AG04449 (cell line): ENCODE measurements at regions of chr11 and their contacts with region 1.

Region 1: DNA sequence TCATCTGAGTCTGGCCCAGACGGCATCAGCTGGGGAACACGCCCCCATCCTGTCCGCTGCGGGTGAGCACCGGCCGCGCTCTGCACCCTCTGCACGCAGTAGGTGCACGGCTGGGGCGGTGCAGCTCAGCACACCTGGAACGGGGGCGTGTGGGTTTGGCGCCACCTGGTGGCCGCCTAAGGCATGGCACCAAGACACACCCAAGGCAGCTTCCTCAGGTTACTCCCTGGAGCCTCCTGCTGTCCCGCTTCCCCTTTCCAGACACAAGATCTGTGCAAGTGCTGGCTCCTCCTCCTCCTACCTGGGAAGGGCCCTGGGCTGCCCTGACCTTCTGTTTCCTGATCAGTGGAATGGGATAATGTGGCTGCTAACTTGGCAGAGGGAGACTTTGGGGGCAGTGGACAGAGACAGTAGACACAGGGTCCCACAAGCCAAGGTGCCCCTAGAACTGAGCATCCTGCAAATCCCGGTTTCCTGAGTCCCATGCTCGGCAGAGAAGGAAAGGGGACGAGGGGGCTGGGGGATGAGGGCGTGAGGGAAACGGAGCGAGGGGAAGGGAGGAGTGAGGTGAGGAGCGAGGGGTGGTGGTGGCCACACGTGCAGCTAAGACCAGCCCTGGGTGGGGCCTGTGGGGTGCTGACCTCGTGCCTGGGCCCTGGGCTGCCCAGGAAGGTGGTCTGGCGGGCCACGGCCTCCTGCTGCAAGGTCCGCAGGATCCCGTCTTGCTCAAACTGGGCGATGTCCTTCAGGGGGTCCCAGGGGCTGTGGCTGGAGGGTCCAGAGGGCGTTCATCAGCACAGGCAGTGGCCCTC is 34.8 kb upstream of the CARS1 start:
- DNase-seq: no peak
- H3K4me3 ChIP-seq: no peak overlapping the region
- CTCF ChIP-seq: peak; percentile 98

Region 2: GRCh38 chr11:2778630-2779498 is 313.1 kb before region 1 on chr11:
- CTCF ChIA-PET with region 1: no interaction called
- POLR2A ChIA-PET with region 1: no interaction called
- DNase-seq: no peak
- H3K4me3 ChIP-seq: no peak overlapping the region
- CTCF ChIP-seq: no peak

Region 3: DNA sequence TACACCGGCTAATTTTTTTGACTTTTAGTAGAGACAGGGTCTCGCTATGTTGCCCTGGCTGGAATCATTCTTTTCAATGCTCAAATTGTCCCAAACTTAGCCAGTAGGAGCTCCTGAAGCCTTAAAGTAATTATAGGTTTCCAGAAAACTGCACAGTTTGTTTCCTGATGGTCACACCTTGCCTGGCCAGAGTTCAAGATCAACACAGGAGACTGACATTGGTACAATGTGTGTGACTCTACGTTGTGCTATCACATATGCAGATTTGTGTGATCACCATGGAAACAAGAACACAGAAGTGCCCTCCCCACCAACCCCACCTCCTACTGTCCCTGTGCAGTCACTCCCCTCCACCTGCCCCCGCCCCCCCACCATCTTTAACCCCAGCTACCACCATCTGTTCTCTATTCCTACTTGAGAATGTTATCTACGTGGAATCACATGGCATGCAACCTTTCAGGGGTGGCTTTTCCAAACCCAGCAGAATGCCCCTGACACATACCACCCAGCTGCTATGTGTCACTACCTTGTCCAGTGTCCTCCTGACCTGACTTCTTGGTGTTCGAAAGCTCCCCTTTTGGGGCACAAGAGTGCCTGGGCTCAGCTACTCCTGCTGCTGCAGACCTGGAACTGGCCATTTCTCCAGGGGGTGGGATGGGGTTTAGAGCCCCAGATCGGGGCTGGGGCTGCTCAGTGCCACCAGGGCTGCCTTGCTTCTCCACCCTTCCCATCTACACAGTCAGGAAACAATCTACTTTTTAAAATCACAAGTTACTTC is 93.7 kb before region 1 on chr11:
- CTCF ChIA-PET with region 1: interaction called, 10 read pairs
- POLR2A ChIA-PET with region 1: no interaction called
- DNase-seq: no peak
- H3K4me3 ChIP-seq: no peak overlapping the region
- CTCF ChIP-seq: no peak

Region 4: DNA sequence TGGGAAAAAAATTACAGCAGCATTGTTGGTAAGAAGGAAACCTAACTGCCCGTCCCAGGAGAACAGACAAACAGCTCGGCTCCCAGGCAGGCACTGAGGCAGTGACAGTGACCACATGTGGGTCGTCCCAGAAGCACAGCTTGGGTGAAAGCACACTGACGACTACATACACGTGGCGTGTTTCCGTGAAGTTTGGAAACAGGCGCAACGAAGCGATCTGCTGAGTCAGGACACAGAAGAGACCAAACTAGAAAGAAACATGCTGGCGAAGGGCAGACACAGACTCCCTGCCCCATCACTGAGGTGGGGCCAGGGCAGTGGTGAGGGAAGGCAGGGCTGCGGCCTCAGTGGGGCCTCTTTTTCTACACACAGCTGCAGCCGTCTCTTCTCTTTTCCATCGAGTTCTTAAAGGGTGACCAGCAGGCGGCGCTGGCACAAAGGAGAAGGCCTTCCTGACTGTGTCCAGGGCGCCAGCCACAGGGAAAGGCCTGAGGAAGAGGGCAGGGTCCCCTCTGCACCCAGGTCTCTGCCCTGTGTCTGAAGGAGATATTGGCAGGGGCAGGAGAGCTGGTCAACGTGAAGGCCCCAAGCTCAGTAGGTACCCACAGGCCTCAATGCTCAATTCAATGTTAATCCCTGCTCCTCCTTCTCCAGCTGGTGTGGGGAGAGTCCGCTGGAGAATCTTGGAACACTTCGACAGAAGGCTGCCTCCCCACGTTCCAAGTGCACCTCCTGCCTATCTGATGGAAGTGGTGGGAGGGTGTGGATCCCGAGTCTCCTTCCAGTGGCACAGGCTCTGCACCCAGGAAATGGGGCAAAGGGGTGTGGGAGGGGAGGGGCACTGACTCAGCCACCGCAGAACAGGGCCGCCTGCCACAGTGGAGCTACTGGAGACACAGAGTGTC is 54.7 kb before region 1 on chr11:
- CTCF ChIA-PET with region 1: interaction called, 157 read pairs
- POLR2A ChIA-PET with region 1: interaction called, 4 read pairs
- DNase-seq: no peak
- H3K4me3 ChIP-seq: no peak overlapping the region
- CTCF ChIP-seq: peak; percentile 78

Region 5: DNA sequence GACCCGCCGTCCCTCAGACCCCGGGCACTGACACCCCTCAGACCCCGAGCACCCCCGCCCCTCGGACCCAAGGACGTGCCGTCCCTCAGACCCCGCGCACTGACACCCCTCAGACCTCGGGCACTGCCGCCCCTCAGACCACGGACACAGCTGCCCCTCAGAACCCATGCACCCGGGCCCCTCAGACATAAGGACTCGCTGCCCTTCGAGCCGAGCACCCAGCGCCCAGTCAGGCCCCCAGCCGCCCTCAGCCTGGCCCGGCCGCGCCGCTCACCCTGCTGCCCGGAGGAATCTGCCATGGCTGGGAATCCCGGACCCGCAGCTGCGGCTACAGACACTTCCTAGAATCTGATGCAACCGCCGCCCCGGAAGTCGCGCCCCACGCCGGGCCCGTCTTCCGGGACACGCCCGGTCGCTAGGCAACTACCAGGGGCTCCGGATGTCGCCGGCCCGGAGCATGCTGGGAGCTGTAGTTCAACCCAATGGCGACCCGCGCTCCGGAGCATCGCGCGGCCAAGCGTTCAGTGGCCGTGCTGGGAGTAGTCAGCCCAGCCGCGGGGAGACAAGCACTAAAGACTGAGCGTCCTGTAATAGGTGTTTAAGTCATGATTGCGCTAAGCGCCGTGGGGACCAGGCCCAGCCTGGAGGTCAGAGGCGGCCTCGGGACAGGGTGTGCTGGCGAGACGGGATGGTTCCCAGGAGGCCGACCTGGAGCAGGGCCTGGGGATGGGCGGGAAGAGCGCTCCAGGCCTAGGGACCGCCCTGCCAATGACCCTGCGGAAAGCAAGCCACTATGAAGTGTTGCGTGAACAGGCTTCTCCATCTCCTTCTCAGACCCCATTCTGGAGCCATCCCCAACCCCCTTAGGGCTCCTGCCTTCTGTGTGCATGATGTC is 34.7 kb before region 1 on chr11 and contains the start of gene CARS1:
- CTCF ChIA-PET with region 1: interaction called, 109 read pairs
- POLR2A ChIA-PET with region 1: interaction called, 3 read pairs
- DNase-seq: peak; percentile 40
- H3K4me3 ChIP-seq: peak within 1 kb of the TSS; percentile 98
- CTCF ChIP-seq: no peak

Region 6: GRCh38 chr11:3080104-3080503 is 11.9 kb before region 1 on chr11:
- CTCF ChIA-PET with region 1: interaction called, 40 read pairs
- POLR2A ChIA-PET with region 1: no interaction called
- DNase-seq: no peak
- H3K4me3 ChIP-seq: no peak overlapping the region
- CTCF ChIP-seq: no peak

Region 7: GRCh38 chr11:3109921-3110706 is 18.1 kb after region 1 on chr11:
- CTCF ChIA-PET with region 1: interaction called, 32 read pairs
- POLR2A ChIA-PET with region 1: no interaction called
- DNase-seq: no peak
- H3K4me3 ChIP-seq: no peak overlapping the region
- CTCF ChIP-seq: peak; percentile 64